A549 (cell line): ENCODE measurements at regions of chr20 and their contacts with region 1.

Region 1: DNA sequence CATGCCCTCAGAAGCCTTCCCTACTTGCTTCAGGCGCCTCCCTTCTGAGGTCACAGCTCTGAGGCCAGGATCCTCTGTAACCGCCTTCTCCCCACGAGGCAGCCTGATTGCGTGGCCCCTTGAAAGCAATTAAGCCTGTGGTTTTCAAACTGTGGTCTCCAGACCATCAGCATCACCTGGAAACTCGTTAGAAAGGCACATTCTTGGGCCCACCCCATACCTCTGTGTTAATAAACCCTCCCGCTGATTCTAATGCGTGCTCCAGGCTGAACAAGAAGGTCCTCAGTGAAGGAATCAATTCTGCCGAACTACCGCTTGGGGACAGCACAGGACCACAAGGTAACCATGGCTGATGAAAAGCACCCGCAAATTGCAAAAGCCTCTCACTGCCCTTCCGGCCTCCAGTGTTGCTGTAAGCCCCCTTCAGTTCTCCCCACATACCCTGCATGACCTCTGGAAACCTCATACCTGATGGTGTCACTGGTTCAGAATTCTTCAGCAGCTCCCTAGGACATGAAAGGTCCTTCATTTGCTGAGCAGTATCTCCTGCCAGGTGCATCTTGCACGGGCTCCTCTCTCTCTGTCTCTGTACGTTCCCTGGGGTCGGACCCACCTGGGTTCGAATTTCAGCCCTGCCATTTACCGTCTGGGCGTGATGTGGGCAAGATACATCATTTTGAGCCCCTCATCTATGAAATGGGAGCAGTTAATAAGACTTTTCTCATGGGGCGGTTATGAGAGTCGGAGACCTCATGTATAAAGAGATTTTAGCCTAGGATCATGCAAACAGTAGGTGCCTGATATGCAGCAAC is 93.3 kb upstream of the RNF24 start:
- DNase-seq: peak; percentile 91 to 95
- ATAC-seq: peak; percentile 79 to 87
- H3K4me3 ChIP-seq: no peak overlapping the region
- H3K27ac ChIP-seq: peak overlapping the region; percentile 94 to 96
- H3K4me1 ChIP-seq: peaks cover 54% of the 10 kb centered on the region
- CTCF ChIP-seq: peak; percentile 100
- EP300 ChIP-seq: peak in 1 of 2 experiments; percentile 50; a peak in 1 of 5 replicates
- POLR2A ChIP-seq: no peak
- RAD21 ChIP-seq: peak; percentile 100

Region 2: DNA sequence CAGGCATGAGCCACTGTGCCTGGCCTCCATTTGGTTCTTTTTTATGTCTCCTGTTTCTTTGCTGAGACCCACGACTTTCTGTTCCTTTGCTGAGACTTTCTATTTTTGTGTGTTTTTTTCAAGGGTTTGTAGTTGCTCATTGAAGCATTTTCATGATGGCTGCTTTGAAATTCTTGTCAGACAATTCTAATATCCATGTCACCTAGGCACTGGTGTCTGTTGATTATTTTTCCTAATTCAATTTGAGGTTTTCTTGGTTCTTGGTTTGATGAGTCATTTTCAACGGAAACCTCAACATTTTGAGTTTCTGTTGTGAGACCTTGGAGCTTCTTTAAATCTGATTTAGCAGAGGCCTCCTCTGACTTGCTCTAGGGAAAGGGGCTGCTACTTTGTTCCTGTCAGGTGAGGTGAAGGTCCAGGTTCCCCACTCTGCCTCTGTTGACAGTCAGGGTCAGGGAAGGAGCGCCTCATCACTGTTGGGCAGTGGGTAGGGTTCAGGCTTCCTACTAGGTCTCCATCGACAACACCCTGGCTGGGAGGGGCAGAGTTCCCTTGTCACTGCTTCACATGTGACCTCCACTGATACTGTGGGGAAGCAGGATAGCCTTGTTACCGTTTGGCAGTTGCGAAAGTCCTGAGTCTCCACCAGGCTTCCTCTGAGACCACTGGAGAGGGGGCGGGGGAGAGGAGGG is 26.1 kb before region 1 on chr20:
- CTCF ChIA-PET with region 1: interaction called, 13 read pairs
- POLR2A ChIA-PET with region 1: no interaction called
- DNase-seq: no peak
- ATAC-seq: no peak
- H3K4me3 ChIP-seq: no peak overlapping the region
- H3K27ac ChIP-seq: peak overlapping the region in 1 of 2 experiments; percentile 31; a peak in 1 of 6 replicates
- H3K4me1 ChIP-seq: peaks cover 8% of the 10 kb centered on the region; the same call in 2 of the 3 replicates
- CTCF ChIP-seq: no peak
- EP300 ChIP-seq: no peak
- POLR2A ChIP-seq: no peak
- RAD21 ChIP-seq: no peak

Region 3: DNA sequence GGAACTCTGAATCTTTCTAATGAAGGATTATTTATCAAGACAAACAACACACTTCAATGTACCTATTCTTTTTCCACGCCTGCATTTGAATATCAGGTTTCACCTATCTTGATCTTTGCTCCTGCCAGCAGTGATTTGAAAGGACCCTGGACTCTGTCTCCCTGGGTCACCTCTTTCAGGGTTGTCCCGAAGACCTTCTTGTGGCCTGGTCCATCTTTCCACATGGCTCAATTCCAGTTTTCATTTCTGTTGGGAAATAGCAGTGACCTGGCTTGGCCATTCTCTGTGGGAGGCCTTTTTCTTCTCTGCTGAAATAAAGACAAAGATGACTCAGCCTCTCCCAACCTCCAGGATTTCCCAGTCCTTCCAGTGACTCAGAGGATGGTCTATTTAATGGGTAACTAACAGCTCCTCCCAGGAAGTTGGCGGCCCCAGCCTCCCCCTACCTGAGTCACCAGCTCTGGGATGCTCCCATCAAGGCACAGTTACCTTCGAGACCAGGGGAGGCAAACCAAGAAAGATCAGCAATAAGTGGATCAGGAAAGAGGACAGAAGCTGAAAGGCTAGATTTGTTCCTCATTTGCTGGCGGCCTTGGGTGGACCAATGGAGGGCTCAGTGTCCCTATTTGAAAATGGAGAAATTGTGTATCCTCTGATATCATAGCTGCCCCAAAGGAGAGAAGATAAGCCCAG is 26.8 kb after region 1 on chr20:
- CTCF ChIA-PET with region 1: interaction called, 36 read pairs
- POLR2A ChIA-PET with region 1: interaction called, 13 read pairs
- DNase-seq: peak; percentile 98 to 100
- ATAC-seq: peak; percentile 83 to 90
- H3K4me3 ChIP-seq: peak overlapping the region; percentile 24
- H3K27ac ChIP-seq: peak overlapping the region; percentile 93
- H3K4me1 ChIP-seq: peaks cover 62% of the 10 kb centered on the region
- CTCF ChIP-seq: no peak
- EP300 ChIP-seq: peak; percentile 98 to 99
- POLR2A ChIP-seq: no peak
- RAD21 ChIP-seq: peak; percentile 34 to 71; a peak in 4 of 5 replicates

Region 4: GRCh38 chr20:4160761-4161305 is 52.1 kb after region 1 on chr20:
- CTCF ChIA-PET with region 1: interaction called, 67 read pairs
- POLR2A ChIA-PET with region 1: no interaction called
- DNase-seq: no peak
- ATAC-seq: peak in 1 of 2 experiments; percentile 8; a peak in 3 of 6 replicates
- H3K4me3 ChIP-seq: no peak overlapping the region
- H3K27ac ChIP-seq: peak overlapping the region; percentile 28 to 76; a peak in 3 of 6 replicates
- H3K4me1 ChIP-seq: peaks cover 98% of the 10 kb centered on the region
- CTCF ChIP-seq: no peak
- EP300 ChIP-seq: no peak
- POLR2A ChIP-seq: no peak
- RAD21 ChIP-seq: no peak

Region 5: GRCh38 chr20:4187147-4187546 is 78.4 kb after region 1 on chr20:
- CTCF ChIA-PET with region 1: interaction called, 62 read pairs
- POLR2A ChIA-PET with region 1: no interaction called
- DNase-seq: no peak
- ATAC-seq: peak in 1 of 2 experiments; percentile 8; a peak in 4 of 6 replicates
- H3K4me3 ChIP-seq: no peak overlapping the region
- H3K27ac ChIP-seq: peak overlapping the region in 1 of 2 experiments; percentile 63; a peak in 3 of 6 replicates
- H3K4me1 ChIP-seq: peaks cover 43% of the 10 kb centered on the region
- CTCF ChIP-seq: no peak
- EP300 ChIP-seq: no peak
- POLR2A ChIP-seq: no peak
- RAD21 ChIP-seq: no peak

Region 6: GRCh38 chr20:4234128-4234527 is 125.4 kb after region 1 on chr20:
- CTCF ChIA-PET with region 1: interaction called, 11 read pairs
- POLR2A ChIA-PET with region 1: no interaction called
- DNase-seq: peak in 1 of 2 experiments; percentile 49
- ATAC-seq: peak in 1 of 2 experiments; percentile 22; a peak in 1 of 6 replicates
- H3K4me3 ChIP-seq: no peak overlapping the region
- H3K27ac ChIP-seq: no peak overlapping the region
- H3K4me1 ChIP-seq: 0 out of 3 replicates have a peak, but pooled peaks cover 4% of the 10 kb centered on the region
- CTCF ChIP-seq: no peak
- EP300 ChIP-seq: no peak
- POLR2A ChIP-seq: no peak
- RAD21 ChIP-seq: no peak